WTC11 (cell line): ENCODE measurements at regions of chr16 and their contacts with region 1.

Region 1: DNA sequence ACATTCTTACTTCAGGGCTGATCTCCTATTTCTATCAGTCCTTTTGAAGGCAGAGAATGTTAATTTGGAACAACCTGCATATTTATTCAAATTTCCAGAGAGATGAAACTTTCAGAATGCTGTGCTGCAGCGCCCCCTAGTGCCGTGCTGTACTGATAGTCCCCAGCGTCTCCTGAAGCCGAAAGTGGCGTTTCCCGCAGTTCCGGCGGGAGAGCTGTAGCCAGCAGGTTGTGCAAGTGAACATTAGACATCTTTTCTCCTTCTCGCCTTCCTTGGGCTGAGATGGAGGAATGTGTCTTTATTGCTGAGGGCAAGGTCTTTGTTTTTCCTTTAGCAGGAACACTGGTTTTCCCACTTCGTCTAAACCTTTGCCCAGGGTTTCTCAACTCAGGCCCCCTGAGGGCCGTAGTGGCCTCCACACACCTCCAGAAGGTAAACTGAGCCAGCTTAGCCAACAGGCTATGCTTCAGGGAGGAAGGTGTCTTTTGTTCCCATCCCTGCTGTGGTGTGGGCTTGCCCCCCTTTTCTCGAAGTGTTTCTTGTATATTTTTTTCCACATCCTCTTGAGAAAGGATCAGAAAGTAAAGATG is 26.4 kb downstream of the USP10 start:
- DNase-seq: peak; percentile 91
- ATAC-seq: peak; percentile 60
- H3K4me3 Mint-ChIP-seq: peak overlapping the region; percentile 44
- H3K27ac Mint-ChIP-seq: peak overlapping the region; percentile 94
- H3K4me1 Mint-ChIP-seq: peaks cover 88% of the 10 kb centered on the region
- H3K27me3 Mint-ChIP-seq: no peaks in the 10 kb centered on the region
- CTCF ChIP-seq: peak; percentile 98

Region 2: GRCh38 chr16:84599521-84600202 is 126.5 kb before region 1 on chr16:
- CTCF ChIA-PET with region 1: interaction called, 18 read pairs
- POLR2A ChIA-PET with region 1: no interaction called
- DNase-seq: peak; percentile 74
- ATAC-seq: peak; percentile 74
- H3K4me3 Mint-ChIP-seq: peak overlapping the region; percentile 41
- H3K27ac Mint-ChIP-seq: peak overlapping the region; percentile 29
- H3K4me1 Mint-ChIP-seq: peaks cover 63% of the 10 kb centered on the region
- H3K27me3 Mint-ChIP-seq: no peaks in the 10 kb centered on the region; the same call in 1 of the 2 replicates
- CTCF ChIP-seq: no peak

Region 3: DNA sequence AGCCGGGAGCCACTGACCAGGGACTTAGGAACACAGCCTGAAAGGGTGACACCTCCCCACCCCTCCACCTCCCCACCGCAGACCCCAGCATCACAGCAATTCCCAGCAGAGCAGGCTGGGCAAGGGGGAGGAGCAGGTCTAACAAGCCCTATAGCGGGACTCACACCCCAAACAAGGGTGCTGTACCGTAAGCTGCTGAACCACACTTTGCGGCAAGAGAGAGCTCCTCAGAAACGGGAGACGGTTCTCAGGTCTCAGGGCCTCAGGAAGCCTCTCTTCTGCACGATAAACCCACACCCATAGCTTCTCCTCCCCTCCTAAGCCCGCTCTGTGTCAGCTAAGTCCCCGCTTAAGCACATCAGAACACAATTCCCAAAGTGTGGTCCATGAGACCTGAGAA is 96.6 kb before region 1 on chr16:
- CTCF ChIA-PET with region 1: interaction called, 10 read pairs
- POLR2A ChIA-PET with region 1: no interaction called
- DNase-seq: no peak
- ATAC-seq: peak; percentile 54
- H3K4me3 Mint-ChIP-seq: no peak overlapping the region
- H3K27ac Mint-ChIP-seq: no peak overlapping the region; the same call in 1 of the 2 replicates
- H3K4me1 Mint-ChIP-seq: peaks cover 10% of the 10 kb centered on the region
- H3K27me3 Mint-ChIP-seq: no peaks in the 10 kb centered on the region
- CTCF ChIP-seq: no peak

Region 4: GRCh38 chr16:84672276-84673202 is 53.6 kb before region 1 on chr16:
- CTCF ChIA-PET with region 1: interaction called, 61 read pairs
- POLR2A ChIA-PET with region 1: no interaction called
- DNase-seq: peak; percentile 92
- ATAC-seq: peak; percentile 84
- H3K4me3 Mint-ChIP-seq: no peak overlapping the region
- H3K27ac Mint-ChIP-seq: peak overlapping the region; percentile 63
- H3K4me1 Mint-ChIP-seq: peaks cover 35% of the 10 kb centered on the region
- H3K27me3 Mint-ChIP-seq: no peaks in the 10 kb centered on the region
- CTCF ChIP-seq: peak; percentile 91

Region 5: DNA sequence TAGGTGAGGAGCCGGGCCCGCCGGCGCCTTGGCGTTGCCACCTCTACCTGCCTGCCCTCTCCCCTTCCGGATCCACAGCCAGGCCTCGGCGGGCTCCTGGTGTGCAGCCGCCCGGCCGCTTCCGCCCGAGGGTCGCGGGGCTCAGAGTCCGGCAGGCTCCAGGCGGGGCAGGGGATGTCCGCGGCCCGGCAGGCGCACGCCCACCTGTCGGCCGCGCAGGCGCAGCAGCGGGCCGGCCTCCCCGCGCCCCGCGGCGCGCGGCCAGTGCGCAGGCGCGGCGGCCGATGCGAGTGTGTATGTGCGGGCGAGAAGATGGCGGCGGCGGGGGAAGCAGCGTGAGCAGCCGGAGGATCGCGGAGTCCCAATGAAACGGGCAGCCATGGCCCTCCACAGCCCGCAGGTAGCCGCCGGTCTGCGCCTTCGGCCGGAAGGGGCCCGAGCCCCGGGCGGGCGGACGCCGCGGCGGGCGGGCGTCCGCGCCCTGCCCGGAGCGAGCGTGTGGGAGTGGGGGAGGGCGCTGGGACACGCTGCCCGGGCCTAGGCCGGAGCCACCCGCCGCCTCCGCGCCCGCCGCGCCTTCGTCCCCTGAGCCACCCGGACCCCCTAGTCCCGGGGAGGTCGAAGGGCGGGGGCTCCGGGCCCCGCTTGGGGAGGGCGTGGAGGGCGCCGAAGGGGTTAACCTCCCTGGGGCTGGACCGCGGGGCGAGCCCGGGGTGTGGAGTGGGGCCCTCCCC is 26.3 kb before region 1 on chr16 and contains the start of gene USP10:
- CTCF ChIA-PET with region 1: interaction called, 16 read pairs
- POLR2A ChIA-PET with region 1: interaction called, 4 read pairs
- DNase-seq: peak; percentile 87
- ATAC-seq: peak; percentile 95
- H3K4me3 Mint-ChIP-seq: peak within 1 kb of the TSS; percentile 97
- H3K27ac Mint-ChIP-seq: peak within 1 kb of the TSS; percentile 97
- H3K4me1 Mint-ChIP-seq: peaks cover 41% of the 10 kb centered on the region
- H3K27me3 Mint-ChIP-seq: no peaks in the 10 kb centered on the region
- CTCF ChIP-seq: no peak
- total RNA-seq, gene USP10: 138 to 152 TPM (median 139 TPM) in 3 replicates

Region 6: GRCh38 chr16:84738255-84739038 is 12.3 kb after region 1 on chr16:
- CTCF ChIA-PET with region 1: interaction called, 86 read pairs
- POLR2A ChIA-PET with region 1: no interaction called
- DNase-seq: peak; percentile 82
- ATAC-seq: peak; percentile 70
- H3K4me3 Mint-ChIP-seq: no peak overlapping the region
- H3K27ac Mint-ChIP-seq: 0 out of 2 replicates have a peak overlapping the region, but pooled peaks have one; percentile 89
- H3K4me1 Mint-ChIP-seq: peaks cover 88% of the 10 kb centered on the region
- H3K27me3 Mint-ChIP-seq: no peaks in the 10 kb centered on the region
- CTCF ChIP-seq: peak; percentile 97

Region 7: DNA sequence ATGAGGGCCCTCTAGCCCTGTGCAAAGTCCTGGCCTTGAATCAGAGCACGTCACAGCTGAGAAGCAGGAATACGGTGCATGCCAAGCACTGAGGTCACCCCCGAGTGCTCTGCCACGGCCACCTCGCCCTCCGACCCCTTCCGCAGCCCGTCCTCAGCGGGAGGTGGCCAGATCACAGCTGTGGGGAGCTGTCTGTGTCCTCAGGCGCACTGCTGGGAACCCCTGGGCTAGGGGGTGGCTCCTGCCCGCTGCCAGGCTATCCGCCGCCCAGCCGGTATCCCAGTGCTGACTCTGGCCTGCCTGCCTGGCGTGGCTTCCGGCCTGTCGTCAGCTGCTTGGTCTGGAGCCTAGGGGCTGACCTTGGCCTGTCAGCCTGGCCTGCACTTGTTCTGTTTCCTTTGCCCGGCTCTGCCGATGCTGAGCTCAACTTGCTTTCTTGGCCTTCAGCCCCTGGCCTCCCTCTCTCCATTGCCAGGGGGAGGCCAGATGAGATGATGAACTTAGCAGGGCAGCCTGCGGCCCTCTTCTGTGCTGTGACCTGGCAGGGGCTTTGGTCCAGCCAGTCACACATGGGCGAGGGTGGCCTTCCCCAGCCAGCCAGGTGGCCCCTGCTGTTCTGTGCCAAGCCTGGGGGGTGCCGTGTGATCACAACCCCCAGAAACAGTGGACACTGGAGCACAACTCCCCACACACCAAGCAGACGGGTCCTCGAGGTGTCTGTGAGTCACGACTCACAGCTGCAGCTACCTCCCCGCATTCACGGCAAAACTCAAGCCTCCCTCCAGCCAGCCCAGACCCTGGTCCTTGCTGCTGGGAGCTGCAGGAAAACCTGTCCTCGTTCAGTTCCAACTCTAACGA is 207.8 kb after region 1 on chr16:
- CTCF ChIA-PET with region 1: no interaction called
- POLR2A ChIA-PET with region 1: no interaction called
- DNase-seq: no peak
- ATAC-seq: no peak
- H3K4me3 Mint-ChIP-seq: no peak overlapping the region
- H3K27ac Mint-ChIP-seq: peak overlapping the region; percentile 49; the same call in 1 of the 2 replicates
- H3K4me1 Mint-ChIP-seq: no peaks in the 10 kb centered on the region
- H3K27me3 Mint-ChIP-seq: no peaks in the 10 kb centered on the region
- CTCF ChIP-seq: no peak